ENCODE measurements at regions of chr3 and their contacts with region 1.

Region 1: DNA sequence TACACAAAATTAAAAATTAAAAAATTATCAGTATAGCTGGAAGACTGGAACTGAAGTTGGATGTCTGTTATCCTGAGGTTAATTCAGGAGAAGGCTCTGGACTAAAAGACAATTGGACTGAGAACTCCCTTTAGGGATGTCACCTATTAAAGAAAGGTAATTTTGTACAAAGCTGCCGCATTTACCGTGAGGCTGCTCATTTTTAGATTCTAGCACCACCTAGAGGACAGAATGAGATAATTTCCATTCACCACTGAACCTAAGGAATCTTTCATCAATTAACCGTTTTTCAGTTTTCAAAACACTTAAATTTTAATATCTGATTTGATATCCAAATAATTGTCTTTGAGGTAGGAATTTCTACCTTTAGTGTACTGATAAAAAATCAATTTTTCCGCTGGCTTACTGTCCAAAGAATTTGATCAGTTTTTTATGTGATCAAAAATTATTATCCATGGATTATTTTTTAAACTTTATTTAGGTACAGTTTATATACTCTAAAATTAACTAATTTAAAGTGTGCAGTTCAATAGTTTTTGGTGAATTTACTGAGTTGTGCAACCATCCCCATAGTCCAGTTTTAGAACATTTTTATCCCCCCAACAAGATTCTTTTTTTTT is 106.7 kb upstream of the TNIK start:
- DNase-seq: no peak
- ATAC-seq: peak in 2 of 4 donors; percentile 37 to 44
- H3K4me3 ChIP-seq: no peak overlapping the region
- H3K27ac ChIP-seq: no peak overlapping the region
- H3K4me1 ChIP-seq: peaks cover 0 to 26% (median 8%) of the 10 kb centered on the region in 12 donors
- H3K27me3 ChIP-seq: no peaks in the 10 kb centered on the region
- CTCF ChIP-seq: peak; percentile 62 to 85 (median 76)
- POLR2A ChIP-seq: no peak

Region 2: DNA sequence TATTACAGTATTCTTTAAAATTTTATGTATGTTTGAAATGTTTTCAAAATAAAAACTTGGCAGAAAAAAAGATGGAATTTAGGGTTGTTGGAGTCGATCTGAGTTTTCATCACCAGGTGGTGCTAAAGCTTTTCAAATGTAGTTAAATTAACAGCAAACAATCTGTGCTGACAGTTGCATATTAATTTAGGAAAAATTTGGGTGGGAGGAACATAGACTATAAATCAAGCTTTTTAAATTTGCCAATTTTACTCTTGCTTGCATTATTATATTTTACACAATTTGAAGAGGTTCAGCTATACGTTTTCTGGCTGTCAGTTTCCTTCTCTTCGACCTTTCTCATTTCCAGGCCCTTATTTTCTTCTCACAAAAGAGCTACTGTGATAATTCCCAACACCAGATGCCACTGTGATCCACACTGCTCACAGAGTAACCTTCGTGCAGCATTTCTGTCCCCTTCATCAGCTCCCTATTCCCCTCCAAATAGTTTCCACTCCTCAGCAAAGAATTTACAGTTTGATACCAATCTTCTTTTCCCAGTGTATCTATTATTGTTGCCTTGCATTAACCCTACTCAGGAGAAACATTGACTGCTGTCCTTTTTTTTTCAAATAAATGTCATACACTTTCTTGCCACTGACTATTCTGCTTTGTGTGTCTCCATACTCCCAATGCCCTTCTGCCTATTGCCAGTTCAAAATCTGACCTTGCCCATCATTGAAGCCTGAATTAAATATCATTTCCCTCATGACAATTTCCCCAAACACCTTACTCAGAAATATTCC is 605.1 kb before region 1 on chr3:
- intact Hi-C with region 1: loop called (anchors 2 to 5 kb)
- DNase-seq: no peak
- ATAC-seq: no peak
- H3K4me3 ChIP-seq: no peak overlapping the region
- H3K27ac ChIP-seq: peak overlapping the region in 1 of 12 donors; percentile 30
- H3K4me1 ChIP-seq: peaks cover 0 to 11% (median 0%) of the 10 kb centered on the region in 12 donors
- H3K27me3 ChIP-seq: no peaks in the 10 kb centered on the region
- CTCF ChIP-seq: peak; percentile 33 to 74 (median 62)
- POLR2A ChIP-seq: no peak

Region 3: DNA sequence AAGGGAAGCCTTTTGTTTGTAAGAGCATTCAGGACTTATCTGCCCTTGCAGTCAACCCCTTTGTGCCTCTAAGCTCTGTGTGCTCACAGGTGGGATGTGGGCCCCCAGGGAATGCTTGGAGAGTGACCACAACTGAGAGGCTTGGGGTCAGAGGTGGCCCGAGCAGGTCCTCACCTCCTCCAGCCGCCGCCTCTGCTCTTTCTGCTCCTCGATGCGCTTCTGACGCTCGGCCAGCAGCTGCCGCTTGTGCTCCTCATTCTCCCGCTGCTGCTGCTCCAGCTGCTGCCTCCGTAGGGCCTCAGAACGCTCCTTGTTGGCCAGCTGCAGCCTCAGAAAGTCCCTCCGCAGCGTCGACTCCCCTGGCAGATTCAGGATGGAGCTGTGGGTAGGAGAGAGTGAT is 409.6 kb before region 1 on chr3:
- intact Hi-C with region 1: loop called in 4 of 10 experiments (anchors 10 kb)
- DNase-seq: peak; percentile 28 to 64 (median 43)
- ATAC-seq: peak in 3 of 4 donors; percentile 31 to 69 (median 48)
- H3K4me3 ChIP-seq: no peak overlapping the region
- H3K27ac ChIP-seq: no peak overlapping the region
- H3K4me1 ChIP-seq: peaks cover 0 to 16% (median 0%) of the 10 kb centered on the region in 12 donors
- H3K27me3 ChIP-seq: no peaks in the 10 kb centered on the region
- CTCF ChIP-seq: peak in 4 of 12 donors; percentile 10 to 35 (median 22)
- POLR2A ChIP-seq: no peak

Region 4: GRCh38 chr3:171306631-171307030 is 260.3 kb before region 1 on chr3:
- intact Hi-C with region 1: loop called in 2 of 10 experiments (anchors 10 kb)
- DNase-seq: peak; percentile 76 to 84 (median 79)
- ATAC-seq: peak; percentile 91 to 94 (median 93)
- H3K4me3 ChIP-seq: peak overlapping the region in 5 of 12 donors; percentile 6 to 32 (median 7)
- H3K27ac ChIP-seq: peak overlapping the region; percentile 54 to 85 (median 75)
- H3K4me1 ChIP-seq: peaks cover 0 to 34% (median 15%) of the 10 kb centered on the region in 12 donors
- H3K27me3 ChIP-seq: no peaks in the 10 kb centered on the region
- CTCF ChIP-seq: no peak
- POLR2A ChIP-seq: no peak

Region 5: GRCh38 chr3:171334465-171334811 is 232.5 kb before region 1 on chr3:
- intact Hi-C with region 1: loop called in 3 of 10 experiments (anchors 10 kb)
- DNase-seq: peak in 4 of 5 donors; percentile 33 to 77 (median 64)
- ATAC-seq: peak; percentile 89 to 93 (median 92)
- H3K4me3 ChIP-seq: no peak overlapping the region
- H3K27ac ChIP-seq: peak overlapping the region in 10 of 12 donors; percentile 0 to 83 (median 64)
- H3K4me1 ChIP-seq: peaks cover 0 to 45% (median 16%) of the 10 kb centered on the region in 12 donors
- H3K27me3 ChIP-seq: no peaks in the 10 kb centered on the region
- CTCF ChIP-seq: no peak
- POLR2A ChIP-seq: no peak

Measured in heart left ventricle (tissue), 16 donors.